Mucosa of descending colon (tissue), 3 donors: ENCODE measurements at regions of chr17 and their contacts with region 1.

Region 1: DNA sequence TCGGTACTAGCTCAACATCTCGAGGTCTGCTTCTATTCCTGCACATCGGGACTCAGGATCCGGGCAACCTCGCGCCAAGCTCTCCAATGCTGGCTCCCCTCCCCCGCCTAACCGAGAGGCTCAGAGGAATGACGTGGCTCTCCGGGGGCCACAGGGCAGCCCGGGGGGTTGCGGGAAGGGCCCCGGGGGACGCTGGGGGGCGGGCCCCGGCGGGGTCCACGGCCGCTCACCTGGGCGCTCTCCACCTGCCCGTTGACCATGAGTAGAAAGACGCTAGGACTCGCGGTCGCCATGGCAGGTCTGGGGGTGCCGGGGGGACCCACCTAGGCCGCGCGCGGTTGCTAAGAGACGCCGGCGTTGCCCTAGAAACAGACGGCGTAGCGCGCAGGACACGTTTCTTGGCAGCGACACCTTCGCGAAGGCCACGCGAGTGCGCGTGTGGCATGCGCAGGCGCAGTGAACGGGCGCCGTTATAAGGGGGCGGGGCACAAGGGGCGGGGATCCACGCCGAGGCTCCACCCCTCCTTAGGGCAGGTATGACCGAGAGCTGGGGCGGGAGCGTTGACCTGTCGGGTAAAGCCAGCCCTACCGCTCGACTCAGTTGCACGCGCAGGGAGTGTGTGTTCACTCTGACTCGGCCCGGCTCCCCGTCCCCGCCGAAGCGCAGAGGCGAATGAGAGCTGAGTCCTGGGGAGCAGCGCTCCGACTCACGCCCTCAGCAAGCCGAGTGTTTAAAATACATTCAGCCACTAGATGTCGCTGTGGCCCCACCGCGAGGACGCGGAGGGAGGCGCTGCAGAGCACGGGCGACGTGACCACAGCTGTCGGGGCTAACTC is at the start of gene B9D1:
- DNase-seq: peak; percentile 95 to 98 (median 96)
- ATAC-seq: peak; percentile 97
- H3K4me3 ChIP-seq: peak within 1 kb of the TSS; percentile 22
- H3K4me1 ChIP-seq: peaks cover 9% of the 10 kb centered on the region
- CTCF ChIP-seq: peak; percentile 90
- total RNA-seq, gene B9D1: 5.1 to 11.8 (median 10.7) TPM

Region 2: DNA sequence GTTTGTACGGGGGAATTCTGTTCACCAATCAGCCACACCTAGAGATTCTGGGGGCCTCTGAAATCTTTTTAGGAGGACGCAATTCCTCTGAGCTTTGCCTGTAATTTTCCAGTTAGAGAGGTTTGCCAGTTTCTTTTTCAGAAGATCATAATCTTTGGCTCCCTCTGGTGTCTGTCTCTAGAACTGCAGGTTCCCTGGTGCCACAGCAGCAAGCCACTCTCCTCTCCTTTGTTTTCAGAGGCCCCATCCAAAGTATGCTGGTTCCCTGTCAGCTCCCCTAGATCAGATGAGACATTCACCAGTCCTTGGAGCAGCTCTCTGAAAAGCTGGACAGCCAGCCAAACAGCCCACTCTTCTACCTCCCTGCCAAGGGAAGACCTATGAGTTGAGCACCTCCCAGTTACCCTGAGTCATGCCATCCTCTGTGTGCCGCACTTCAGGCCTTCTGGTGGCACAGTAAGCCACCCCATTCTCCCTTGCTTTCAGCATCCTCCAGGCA is 84.6 kb after region 1 on chr17:
- intact Hi-C with region 1: loop called (anchors 5 kb)
- DNase-seq: peak in 1 of 3 donors; percentile 94
- ATAC-seq: peak; percentile 93
- H3K4me3 ChIP-seq: no peak overlapping the region
- H3K4me1 ChIP-seq: no peaks in the 10 kb centered on the region
- CTCF ChIP-seq: peak; percentile 83

Region 3: GRCh38 chr17:19766422-19767270 is 404.2 kb after region 1 on chr17:
- intact Hi-C with region 1: loop called (anchors 10 kb)
- DNase-seq: peak in 2 of 3 donors; percentile 87 to 90
- ATAC-seq: peak; percentile 94
- H3K4me3 ChIP-seq: no peak overlapping the region
- H3K4me1 ChIP-seq: no peaks in the 10 kb centered on the region
- CTCF ChIP-seq: peak; percentile 85